GM12878 (cell line): ENCODE measurements at regions of chr1 and their contacts with region 1.

Region 1: DNA sequence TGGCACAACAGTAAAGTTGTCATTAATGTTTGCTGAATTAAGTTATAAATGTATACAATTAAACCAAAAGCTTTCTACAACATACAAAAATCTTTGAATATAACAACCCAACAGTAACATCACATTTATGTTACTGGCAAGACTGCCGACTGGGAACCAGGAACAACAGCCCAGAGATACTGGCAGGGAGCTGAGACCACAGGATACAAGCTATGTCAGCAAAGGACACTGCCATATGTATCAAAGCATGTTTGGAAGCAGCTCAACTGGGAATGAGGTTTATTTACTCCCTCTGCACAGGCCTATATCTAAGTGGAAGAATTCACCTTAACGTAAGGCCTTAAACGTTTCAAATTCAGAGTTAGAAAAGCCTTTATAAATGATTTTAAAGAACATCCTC is 50.4 kb downstream of the ARHGAP29 start:
- DNase-seq: no peak
- ATAC-seq: no peak
- H3K4me3 ChIP-seq: no peak overlapping the region
- H3K27ac ChIP-seq: no peak overlapping the region
- H3K4me1 ChIP-seq: no peaks in the 10 kb centered on the region
- H3K27me3 ChIP-seq: no peaks in the 10 kb centered on the region; a peak in 1 of 4 replicates
- CTCF ChIP-seq: no peak
- EP300 ChIP-seq: no peak
- POLR2A ChIP-seq: no peak
- RAD21 ChIP-seq: no peak

Region 2: DNA sequence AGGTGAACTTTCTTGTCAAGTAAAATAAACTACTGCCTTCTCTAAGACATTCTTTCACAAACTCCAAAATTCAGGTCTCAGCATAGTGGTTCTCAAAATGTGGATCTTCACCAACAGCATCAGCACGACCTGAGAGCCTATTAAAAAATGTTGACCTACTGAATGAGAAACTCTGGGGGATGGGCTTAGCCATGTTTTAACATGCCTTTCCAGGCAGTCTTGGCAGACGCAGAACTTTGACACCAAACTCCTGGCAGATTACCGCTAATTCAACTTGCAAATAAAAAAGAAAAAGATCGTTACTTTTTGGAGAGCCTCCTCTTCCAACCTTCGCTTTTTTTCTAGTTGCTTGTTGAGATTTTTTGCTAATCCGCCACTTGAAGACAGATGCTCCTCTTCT is 15.3 kb after region 1 on chr1:
- CTCF ChIA-PET with region 1: interaction called, 5 read pairs
- POLR2A ChIA-PET with region 1: no interaction called
- RAD21 ChIA-PET with region 1: no interaction called
- SMC1A ChIA-PET with region 1: interaction called, 10 read pairs
- in situ Hi-C with region 1: no loop called
- intact Hi-C with region 1: no loop called
- DNase-seq: no peak
- ATAC-seq: no peak
- H3K4me3 ChIP-seq: no peak overlapping the region
- H3K27ac ChIP-seq: no peak overlapping the region
- H3K4me1 ChIP-seq: no peaks in the 10 kb centered on the region
- H3K27me3 ChIP-seq: no peaks in the 10 kb centered on the region
- CTCF ChIP-seq: no peak
- EP300 ChIP-seq: no peak
- POLR2A ChIP-seq: no peak
- RAD21 ChIP-seq: no peak